ENCODE measurements at regions of chr9 and their contacts with region 1.

Region 1: GRCh38 chr9:101449140-101449721 is 13.7 kb upstream of the ALDOB start:
- DNase-seq: peak; percentile 89
- H3K4me3 ChIP-seq: peak overlapping the region; percentile 63 to 83
- H3K27ac ChIP-seq: no peak overlapping the region
- H3K4me1 ChIP-seq: peaks cover 0 to 2% of the 10 kb centered on the region in 2 experiments; a peak in 1 of 4 replicates
- H3K27me3 ChIP-seq: no peaks in the 10 kb centered on the region
- CTCF ChIP-seq: peak; percentile 80
- EP300 ChIP-seq: no peak
- RAD21 ChIP-seq: peak; percentile 49

Region 2: DNA sequence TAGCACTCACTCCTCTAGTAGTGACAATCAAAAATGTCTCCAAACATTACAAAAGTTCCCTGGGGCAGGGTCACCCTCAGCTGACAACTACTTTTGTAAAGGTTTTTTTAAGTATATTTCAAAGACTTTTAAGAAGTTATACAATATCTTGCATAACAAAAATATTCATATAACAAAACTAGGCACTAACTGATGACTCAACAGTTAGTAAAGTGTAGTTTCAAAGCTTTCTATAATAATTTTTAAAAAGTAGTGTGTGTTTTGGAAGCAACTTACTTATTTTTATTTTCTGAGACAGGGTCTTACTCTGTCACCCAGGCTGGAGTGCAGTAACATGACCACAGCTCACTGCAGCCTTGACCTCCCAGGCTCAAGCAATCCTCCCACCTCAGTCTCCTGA is 149.3 kb before region 1 on chr9:
- CTCF ChIA-PET with region 1: no interaction called
- POLR2A ChIA-PET with region 1: no interaction called
- DNase-seq: no peak
- H3K4me3 ChIP-seq: no peak overlapping the region
- H3K27ac ChIP-seq: no peak overlapping the region
- H3K4me1 ChIP-seq: no peaks in the 10 kb centered on the region
- H3K27me3 ChIP-seq: no peaks in the 10 kb centered on the region; the same call in 1 of the 2 replicates
- CTCF ChIP-seq: no peak
- EP300 ChIP-seq: no peak
- RAD21 ChIP-seq: no peak

Region 3: DNA sequence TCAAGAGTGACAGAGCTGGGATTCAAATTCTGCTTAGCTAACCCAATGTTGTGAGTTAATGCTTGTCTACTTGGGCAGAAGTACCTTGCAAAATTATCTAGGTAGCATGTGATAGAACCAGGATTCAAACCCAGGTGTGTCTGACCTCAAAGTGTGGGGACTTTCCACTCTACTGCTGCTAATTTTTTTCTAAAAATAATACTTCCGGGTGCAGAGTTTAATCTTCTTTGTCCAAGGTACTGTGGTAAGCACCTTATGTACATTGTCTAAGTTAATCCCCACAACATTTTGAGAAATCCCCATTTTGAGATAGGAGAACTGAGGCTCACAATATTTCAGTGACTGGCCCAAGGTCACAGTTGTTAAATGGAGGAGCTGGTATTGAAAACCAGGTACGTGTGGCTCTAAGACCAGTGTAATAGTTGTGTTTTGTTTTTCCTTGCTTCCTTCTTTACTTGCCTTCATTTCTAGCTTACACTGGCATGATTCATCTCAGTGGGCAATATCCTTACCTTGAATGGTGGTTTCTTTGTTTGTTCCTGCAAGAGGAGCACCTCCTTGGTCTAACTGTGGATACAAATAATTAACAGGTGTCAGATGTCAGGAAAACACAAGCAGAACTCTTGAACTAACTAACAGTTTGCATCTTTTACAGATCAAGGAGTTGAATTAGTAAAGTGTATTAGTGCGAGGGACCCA is 21.1 kb before region 1 on chr9:
- CTCF ChIA-PET with region 1: interaction called, 20 read pairs
- POLR2A ChIA-PET with region 1: no interaction called
- DNase-seq: no peak
- H3K4me3 ChIP-seq: no peak overlapping the region
- H3K27ac ChIP-seq: no peak overlapping the region
- H3K4me1 ChIP-seq: no peaks in the 10 kb centered on the region
- H3K27me3 ChIP-seq: no peaks in the 10 kb centered on the region; the same call in 1 of the 2 replicates
- CTCF ChIP-seq: no peak
- EP300 ChIP-seq: no peak
- RAD21 ChIP-seq: no peak

Region 4: GRCh38 chr9:101465392-101465791 is 16.2 kb after region 1 on chr9:
- CTCF ChIA-PET with region 1: interaction called, 49 read pairs
- POLR2A ChIA-PET with region 1: no interaction called
- DNase-seq: no peak
- H3K4me3 ChIP-seq: no peak overlapping the region
- H3K27ac ChIP-seq: no peak overlapping the region
- H3K4me1 ChIP-seq: peaks cover 0 to 3% of the 10 kb centered on the region in 2 experiments; a peak in 2 of 4 replicates
- H3K27me3 ChIP-seq: no peaks in the 10 kb centered on the region
- CTCF ChIP-seq: peak; percentile 43
- EP300 ChIP-seq: no peak
- RAD21 ChIP-seq: no peak

Region 5: GRCh38 chr9:101486693-101487442 is 37.6 kb after region 1 on chr9:
- CTCF ChIA-PET with region 1: interaction called, 50 read pairs
- POLR2A ChIA-PET with region 1: no interaction called
- DNase-seq: peak; percentile 86
- H3K4me3 ChIP-seq: peak overlapping the region; percentile 66 to 73
- H3K27ac ChIP-seq: peak overlapping the region; percentile 19 to 87; a peak in 3 of 4 replicates
- H3K4me1 ChIP-seq: peaks cover 0 to 3% of the 10 kb centered on the region in 2 experiments; a peak in 2 of 4 replicates
- H3K27me3 ChIP-seq: no peaks in the 10 kb centered on the region
- CTCF ChIP-seq: peak; percentile 38
- EP300 ChIP-seq: no peak
- RAD21 ChIP-seq: peak; percentile 67

Region 6: DNA sequence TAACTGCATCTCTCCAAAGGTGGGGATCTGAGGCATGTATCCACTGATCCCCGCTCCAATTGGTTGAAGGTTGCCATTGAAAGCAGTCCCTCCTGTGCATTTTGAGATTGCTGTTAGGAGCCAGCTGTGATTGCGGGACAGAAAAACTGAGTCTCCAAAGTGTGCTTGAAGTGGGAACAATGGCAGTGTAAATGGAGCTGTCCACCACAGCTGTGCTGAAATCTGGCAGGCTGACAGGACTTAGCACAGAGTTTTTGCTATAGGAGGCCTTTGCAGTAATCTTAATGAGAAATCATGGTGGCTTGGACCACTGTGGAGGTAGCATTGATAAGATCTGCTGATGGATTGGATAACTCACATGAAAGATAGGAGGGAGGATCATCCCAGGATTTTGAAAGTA is 87.7 kb after region 1 on chr9:
- CTCF ChIA-PET with region 1: interaction called, 363 read pairs
- POLR2A ChIA-PET with region 1: interaction called, 6 read pairs
- DNase-seq: no peak
- H3K4me3 ChIP-seq: no peak overlapping the region
- H3K27ac ChIP-seq: no peak overlapping the region
- H3K4me1 ChIP-seq: peaks cover 0 to 12% of the 10 kb centered on the region in 2 experiments; a peak in 3 of 4 replicates
- H3K27me3 ChIP-seq: no peaks in the 10 kb centered on the region
- CTCF ChIP-seq: no peak
- EP300 ChIP-seq: no peak
- RAD21 ChIP-seq: no peak

Measured in SK-N-SH (cell line).